Psoas muscle (tissue), 8 donors: ENCODE measurements at regions of chr2 and their contacts with region 1.

Region 1: GRCh38 chr2:68512326-68512725 is 44.9 kb downstream of the APLF start:
- DNase-seq: no peak
- ATAC-seq: no peak
- H3K4me3 ChIP-seq: no peak overlapping the region
- H3K27ac ChIP-seq: no peak overlapping the region
- H3K4me1 ChIP-seq: no peaks in the 10 kb centered on the region
- H3K27me3 ChIP-seq: no peaks in the 10 kb centered on the region
- CTCF ChIP-seq: no peak

Region 2: GRCh38 chr2:68458981-68459380 is 53.3 kb before region 1 on chr2:
- intact Hi-C with region 1: loop called in 1 of 2 experiments (anchors 5 kb)
- DNase-seq: no peak
- ATAC-seq: no peak
- H3K4me3 ChIP-seq: no peak overlapping the region
- H3K27ac ChIP-seq: no peak overlapping the region
- H3K4me1 ChIP-seq: no peaks in the 10 kb centered on the region
- H3K27me3 ChIP-seq: no peaks in the 10 kb centered on the region
- CTCF ChIP-seq: no peak